Posterior cingulate gyrus (tissue), 11 donors: ENCODE measurements at regions of chr10 and their contacts with region 1.

Region 1: DNA sequence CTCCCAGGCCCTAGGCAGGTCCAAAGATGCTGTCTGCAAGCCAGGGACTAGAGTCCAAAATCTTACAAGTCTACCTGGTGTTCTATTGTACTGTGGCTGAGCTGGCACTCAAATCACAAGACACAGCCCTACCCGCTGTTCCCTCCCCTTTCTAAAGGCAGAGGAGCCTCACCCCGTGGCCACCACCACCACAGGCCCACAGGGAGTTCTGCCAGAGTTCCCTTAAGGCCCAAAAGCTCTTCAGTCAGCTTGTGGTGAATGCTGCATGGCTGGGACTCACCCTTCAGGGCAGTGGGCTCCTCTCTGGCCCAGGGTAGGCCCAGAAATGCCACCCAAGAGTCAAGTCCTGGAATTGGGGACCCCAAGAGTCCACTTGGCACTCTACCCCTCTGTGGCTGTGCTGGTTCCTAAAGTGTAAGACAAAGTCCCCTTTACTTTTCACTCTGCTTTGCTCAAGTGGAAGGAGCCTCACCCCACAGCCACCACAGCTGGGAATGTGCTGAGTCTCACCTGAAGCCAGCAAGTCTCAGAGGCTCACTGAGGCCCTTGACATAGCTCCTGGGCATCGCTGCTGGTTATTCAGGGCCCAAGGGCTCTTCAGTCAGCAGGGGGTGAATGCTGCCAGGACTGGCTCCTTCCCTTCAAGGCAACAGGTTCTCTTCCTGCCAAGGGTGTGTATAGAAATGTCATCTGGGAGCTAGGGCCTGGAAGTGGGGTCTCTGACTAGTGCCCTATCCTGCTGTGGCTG is 48.8 kb upstream of the PSAP start:
- DNase-seq: peak in 2 of 10 donors; percentile 43 to 73

Region 2: DNA sequence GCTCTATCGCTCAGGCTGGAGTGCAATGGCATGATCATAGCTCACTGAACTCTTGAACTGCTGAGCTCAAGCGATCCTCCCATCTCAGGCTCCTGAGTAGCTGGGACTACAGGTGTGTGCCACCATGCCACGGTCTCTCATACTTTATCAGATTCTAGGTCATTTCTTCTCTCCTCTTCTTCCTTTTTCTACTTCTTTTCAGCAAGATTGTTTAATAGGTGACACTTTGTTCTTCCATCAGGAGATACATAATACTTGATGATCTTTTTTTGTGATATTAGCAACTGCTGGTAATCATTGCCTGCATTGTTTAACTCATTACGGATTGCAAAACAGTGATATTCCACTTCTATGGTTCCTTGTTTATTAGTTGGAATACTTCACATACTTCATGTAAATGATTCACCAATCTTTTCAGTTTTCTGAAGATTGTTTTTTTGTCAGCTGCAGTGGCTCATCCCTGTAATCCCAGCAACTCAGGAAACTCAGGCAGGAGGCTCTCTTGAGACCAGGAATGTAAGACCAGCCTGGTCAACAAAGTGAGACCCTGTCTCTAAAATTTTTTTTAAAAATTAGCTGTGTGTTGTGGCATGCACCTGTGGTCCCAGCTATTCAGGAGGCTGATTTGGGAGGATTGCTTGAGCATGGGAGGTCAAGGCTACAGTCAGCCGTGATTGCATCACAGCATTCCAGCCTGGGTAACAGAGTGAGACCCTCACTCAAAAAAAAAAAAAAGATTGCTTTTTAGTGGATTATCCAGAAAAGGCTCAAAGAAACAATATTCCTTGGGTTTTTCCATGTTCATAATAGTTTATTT is 28.1 kb after region 1 on chr10:
- intact Hi-C with region 1: no loop called
- DNase-seq: no peak

Region 3: DNA sequence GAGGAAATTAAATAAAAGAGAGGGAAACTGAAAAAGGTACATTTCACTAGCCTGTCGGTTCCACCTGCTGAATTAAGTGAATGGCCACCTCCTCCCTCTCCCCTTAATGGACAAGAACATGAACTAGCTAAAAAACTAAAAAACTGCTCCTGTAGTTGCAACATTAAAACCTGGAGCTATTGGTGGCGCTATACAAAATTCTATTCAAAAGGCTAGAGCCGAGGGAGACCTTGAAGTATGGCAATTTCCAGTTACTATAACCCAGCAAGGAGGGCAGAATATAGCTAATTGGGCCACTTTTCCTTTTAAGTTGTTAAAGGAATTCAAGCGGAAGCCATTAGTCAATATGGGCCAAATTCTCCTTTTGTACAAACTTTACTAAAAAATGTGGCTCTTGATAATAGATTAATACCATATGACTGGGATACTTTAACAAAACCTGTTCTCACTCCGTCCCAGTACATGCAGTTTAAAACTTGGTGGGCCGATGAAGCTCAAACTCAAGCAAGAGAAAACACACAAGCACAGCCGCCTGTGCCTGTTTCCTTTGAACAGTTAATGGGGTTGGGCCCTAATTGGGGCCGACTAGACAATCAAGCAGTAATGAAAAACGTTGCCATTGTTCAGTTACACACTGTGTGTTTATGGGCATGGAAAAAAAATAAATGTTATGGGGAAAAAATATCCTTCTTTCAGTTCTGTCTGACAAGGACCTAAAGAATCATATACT is 57.9 kb after region 1 on chr10:
- intact Hi-C with region 1: loop called (anchors 5 kb)
- DNase-seq: no peak